Endothelial cell of umbilical vein (primary cell): ENCODE measurements at regions of chr22 and their contacts with region 1.

Region 1: DNA sequence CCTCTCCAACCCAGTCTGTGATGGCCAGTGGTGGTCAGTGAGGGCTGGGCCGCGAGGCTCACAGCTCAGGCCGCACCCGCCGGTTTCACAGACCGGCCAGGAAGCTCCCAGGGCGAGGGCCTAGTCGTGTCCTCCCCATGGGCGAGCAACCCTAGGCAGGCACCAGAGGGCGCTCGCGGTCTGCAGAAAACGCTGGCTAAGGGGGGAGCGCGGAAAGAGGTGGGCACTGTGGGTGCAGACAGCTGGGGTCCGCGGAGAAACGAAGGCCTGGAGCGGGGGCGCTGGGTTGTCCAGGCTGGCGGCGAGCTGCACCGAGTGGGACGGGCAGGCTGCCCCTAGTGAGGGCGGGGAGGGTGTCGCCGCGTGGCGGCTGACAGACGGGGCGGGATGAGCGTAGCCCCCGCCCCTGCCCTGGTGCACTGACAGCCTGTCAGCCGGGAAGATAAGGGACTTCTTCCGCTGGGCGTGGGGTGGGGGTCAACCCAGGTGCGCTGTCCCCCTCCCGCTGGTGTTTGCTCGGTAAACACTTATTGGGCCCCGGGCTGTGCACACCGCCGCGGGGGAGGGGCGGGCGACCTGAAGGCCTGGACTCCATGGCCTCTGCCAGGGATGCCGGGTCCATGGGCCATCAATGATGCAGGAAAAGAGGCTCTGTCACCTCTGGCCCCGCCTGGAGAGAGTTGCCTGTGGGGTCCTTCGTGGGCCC is 7.5 kb downstream of the GP1BB start:
- DNase-seq: peak; percentile 67
- H3K4me3 ChIP-seq: peak overlapping the region in 2 of 3 experiments; percentile 6 to 25
- H3K27ac ChIP-seq: no peak overlapping the region
- H3K4me1 ChIP-seq: peaks cover 3% of the 10 kb centered on the region
- H3K27me3 ChIP-seq: no peaks in the 10 kb centered on the region
- CTCF ChIP-seq: peak; percentile 94 to 98
- POLR2A ChIP-seq: no peak

Region 2: DNA sequence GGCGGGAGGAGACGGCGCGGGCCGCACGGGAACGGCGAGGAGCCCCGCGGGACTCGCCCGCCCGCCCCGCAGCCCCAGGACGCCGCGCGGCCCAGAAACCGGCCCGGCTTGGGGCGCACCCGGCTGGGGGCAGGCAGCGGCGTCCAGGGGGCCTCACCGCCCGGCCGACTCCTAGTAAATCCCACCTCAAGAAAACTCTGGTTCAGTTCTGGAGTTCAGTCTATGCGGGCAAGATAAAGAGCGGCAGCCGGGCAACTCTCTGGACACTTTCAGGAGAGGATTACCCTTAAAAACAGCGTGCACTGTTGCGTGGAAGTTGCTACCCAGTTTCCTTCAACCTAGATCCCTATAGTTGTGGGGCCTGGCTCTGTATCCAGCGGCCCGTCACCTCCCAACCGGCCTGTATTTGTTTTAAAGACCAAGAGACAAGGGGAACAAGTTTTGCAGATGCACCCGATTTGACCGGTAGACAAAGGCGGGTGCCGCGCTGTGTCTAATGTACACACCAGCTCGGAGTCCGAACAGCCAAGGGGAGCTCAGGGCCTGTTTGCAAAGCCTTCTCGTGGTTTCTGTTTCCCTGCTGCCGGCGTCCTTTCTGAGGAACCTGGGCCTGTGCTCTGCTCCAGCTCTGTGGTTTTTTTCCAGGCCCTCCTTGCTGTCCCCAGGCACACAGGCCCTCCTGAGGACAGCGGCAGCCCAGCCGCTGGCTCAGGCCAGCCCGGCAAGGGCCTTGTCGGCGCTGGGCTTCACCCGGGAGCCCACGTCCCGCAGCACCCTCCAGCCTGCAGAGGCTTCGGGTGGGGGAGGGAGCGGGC is 30.9 kb after region 1 on chr22:
- CTCF ChIA-PET with region 1: interaction called, 18 read pairs
- POLR2A ChIA-PET with region 1: no interaction called
- dilution Hi-C with region 1: no loop called
- intact Hi-C with region 1: no loop called
- DNase-seq: no peak
- H3K4me3 ChIP-seq: peak overlapping the region; percentile 49 to 63 (median 50)
- H3K27ac ChIP-seq: peak overlapping the region; percentile 14
- H3K4me1 ChIP-seq: peaks cover 14% of the 10 kb centered on the region
- H3K27me3 ChIP-seq: peaks cover 17 to 37% of the 10 kb centered on the region in 2 experiments
- CTCF ChIP-seq: no peak
- POLR2A ChIP-seq: no peak

Region 3: GRCh38 chr22:19824197-19825015 is 93.6 kb after region 1 on chr22:
- CTCF ChIA-PET with region 1: no interaction called
- POLR2A ChIA-PET with region 1: no interaction called
- dilution Hi-C with region 1: no loop called
- intact Hi-C with region 1: no loop called
- DNase-seq: no peak
- H3K4me3 ChIP-seq: no peak overlapping the region
- H3K27ac ChIP-seq: no peak overlapping the region
- H3K4me1 ChIP-seq: no peaks in the 10 kb centered on the region
- H3K27me3 ChIP-seq: no peaks in the 10 kb centered on the region
- CTCF ChIP-seq: no peak
- POLR2A ChIP-seq: no peak

Region 4: DNA sequence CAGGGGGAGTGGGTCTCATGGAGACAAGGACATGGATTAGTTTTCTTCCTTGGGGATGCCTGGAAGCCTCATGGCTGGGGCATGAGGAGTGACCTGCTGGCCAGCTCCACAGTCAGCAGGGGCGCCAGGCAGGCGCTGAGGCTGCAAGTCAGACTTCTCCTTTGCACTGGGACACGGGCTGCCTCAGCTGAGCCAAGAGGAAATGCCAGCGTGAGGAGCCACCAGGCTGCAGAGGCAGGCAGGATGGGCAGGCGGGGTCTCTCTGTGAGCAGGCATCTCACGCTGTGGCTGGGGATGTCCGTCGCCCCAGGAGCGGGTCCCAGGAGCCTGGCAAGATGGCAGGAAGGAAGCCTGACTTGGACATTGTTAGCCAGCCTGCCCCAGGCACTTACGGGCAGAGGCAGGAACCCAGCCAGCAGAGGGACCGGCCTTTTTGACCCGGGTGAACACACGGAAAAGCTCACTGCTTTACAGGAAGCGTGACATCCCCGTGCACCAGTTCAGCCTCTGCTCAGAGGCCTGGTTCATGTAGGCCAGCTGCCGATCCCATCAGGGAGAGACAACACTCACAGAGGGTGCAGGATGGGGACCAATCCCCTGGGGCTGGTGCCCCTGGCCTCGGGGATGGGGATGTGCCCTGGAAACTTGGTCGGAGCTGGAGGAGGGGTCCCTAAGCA is 113.7 kb after region 1 on chr22:
- CTCF ChIA-PET with region 1: interaction called, 12 read pairs
- POLR2A ChIA-PET with region 1: no interaction called
- dilution Hi-C with region 1: no loop called
- intact Hi-C with region 1: no loop called
- DNase-seq: peak; percentile 77
- H3K4me3 ChIP-seq: no peak overlapping the region
- H3K27ac ChIP-seq: peak overlapping the region; percentile 80
- H3K4me1 ChIP-seq: peaks cover 32% of the 10 kb centered on the region
- H3K27me3 ChIP-seq: no peaks in the 10 kb centered on the region
- CTCF ChIP-seq: peak; percentile 17 to 39
- POLR2A ChIP-seq: no peak

Region 5: GRCh38 chr22:19891317-19892256 is 160.8 kb after region 1 on chr22:
- CTCF ChIA-PET with region 1: interaction called, 36 read pairs
- POLR2A ChIA-PET with region 1: no interaction called
- dilution Hi-C with region 1: no loop called
- intact Hi-C with region 1: no loop called
- DNase-seq: peak; percentile 90
- H3K4me3 ChIP-seq: no peak overlapping the region
- H3K27ac ChIP-seq: peak overlapping the region; percentile 83
- H3K4me1 ChIP-seq: peaks cover 69% of the 10 kb centered on the region
- H3K27me3 ChIP-seq: no peaks in the 10 kb centered on the region
- CTCF ChIP-seq: no peak
- POLR2A ChIP-seq: peak; percentile 87

Region 6: DNA sequence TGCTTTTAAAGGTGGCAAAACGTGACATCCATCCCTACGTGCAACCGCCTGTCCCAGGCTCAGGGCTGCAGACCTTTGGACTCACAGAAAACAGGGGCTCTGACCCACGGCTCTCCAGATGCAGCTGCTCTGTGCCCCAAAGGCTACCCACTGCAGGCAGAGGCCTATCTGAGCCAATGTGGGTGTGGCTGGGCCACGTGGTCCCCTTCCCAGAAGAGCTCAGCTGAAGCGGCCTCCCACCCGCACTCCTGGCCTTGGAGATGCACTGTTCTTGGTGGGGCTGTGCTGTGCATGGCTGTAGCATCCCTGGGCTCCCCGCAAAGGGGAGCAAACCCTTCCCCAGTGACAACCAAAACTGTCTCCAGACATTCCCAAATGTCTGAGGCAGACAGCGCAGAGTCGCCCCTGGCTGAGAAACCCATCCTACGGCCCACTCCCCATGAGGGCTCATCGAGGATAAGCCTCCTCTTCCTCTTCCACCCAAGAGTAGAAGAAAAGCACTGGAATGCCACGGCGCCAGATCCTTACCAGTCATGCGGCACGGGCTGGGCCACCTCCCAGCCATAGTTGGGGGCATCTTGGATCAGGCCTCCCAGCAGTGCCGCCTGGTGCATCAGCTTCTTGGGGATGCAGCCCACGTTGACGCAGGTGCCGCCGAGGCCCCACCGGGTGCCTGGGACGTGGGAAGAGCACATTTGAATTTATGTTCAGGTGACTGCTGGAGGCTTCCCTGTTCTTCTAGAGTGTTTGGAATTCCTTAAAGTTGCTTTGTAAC is 187.7 kb after region 1 on chr22:
- CTCF ChIA-PET with region 1: interaction called, 372 read pairs
- POLR2A ChIA-PET with region 1: no interaction called
- dilution Hi-C with region 1: no loop called
- intact Hi-C with region 1: no loop called
- DNase-seq: no peak
- H3K4me3 ChIP-seq: no peak overlapping the region
- H3K27ac ChIP-seq: no peak overlapping the region
- H3K4me1 ChIP-seq: no peaks in the 10 kb centered on the region
- H3K27me3 ChIP-seq: no peaks in the 10 kb centered on the region
- CTCF ChIP-seq: no peak
- POLR2A ChIP-seq: no peak

Region 7: DNA sequence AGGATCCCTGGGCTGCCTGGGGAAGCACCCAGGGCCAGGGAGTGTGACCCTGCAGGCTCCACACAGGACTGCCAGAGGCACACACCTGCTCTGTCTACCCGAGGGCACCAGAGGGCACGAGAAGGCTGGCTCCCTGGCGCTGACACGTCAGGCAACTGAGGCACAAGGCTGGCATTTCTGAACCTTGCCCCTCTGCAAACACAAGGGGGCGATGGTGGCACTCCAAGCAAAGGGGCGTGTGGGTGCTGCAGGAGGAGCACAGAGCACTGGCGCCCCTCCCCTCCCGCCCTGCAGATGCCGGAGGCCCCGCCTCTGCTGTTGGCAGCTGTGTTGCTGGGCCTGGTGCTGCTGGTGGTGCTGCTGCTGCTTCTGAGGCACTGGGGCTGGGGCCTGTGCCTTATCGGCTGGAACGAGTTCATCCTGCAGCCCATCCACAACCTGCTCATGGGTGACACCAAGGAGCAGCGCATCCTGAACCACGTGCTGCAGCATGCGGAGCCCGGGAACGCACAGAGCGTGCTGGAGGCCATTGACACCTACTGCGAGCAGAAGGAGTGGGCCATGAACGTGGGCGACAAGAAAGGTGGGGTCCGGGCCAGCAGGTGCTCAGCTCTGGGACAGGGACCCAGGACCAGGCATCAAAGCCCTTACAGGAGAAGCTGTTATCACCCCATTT is 231.6 kb after region 1 on chr22:
- CTCF ChIA-PET with region 1: interaction called, 10 read pairs
- POLR2A ChIA-PET with region 1: no interaction called
- dilution Hi-C with region 1: no loop called
- intact Hi-C with region 1: no loop called
- DNase-seq: peak; percentile 75
- H3K4me3 ChIP-seq: no peak overlapping the region
- H3K27ac ChIP-seq: peak overlapping the region; percentile 4
- H3K4me1 ChIP-seq: peaks cover 28% of the 10 kb centered on the region
- H3K27me3 ChIP-seq: no peaks in the 10 kb centered on the region
- CTCF ChIP-seq: peak; percentile 54 to 83
- POLR2A ChIP-seq: no peak